ENCODE measurements at regions of chr19 and their contacts with region 1.

Region 1: DNA sequence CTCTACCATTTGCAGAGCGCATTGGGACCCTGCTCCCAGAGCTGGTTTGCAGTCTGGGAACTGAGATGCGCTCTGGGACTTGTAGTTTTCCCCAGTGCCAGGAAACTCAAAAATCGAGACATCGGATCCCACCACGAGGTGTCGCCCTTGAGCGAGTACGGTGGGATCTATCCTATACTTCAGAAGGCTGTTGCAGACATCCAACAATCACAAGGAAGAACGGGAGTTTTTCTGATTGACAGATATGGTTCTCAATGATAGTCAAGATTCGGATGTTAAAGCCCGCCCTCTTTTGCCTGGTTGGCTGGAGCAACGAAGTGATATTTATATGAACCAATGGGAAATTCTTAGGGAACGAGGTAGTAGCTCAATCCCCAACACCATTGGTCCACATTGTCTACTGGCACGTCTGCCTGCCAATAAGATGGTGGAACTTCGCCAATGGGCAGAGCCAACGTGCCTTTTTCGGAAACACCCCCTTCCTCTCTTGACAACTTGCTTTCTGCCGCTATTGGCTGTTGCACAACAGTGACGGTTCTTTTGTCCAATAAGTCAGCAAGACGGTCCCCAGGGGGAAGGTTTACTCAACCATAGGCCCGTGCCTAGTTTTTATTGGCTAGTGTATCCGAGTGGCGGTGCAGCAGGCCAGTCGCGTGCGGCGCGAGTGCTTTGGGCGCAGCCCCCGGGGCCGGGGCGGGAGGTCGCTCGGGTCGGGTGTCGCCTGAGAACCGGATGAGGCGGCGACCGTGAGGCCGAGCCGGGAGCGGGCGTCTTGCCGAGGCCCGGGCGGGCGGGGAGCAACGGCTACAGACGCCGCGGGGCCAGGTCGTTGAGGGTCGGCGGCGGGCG is at the start of gene DNM2:
- DNase-seq: peak; percentile 99 to 100 (median 99)
- H3K4me3 ChIP-seq: peak within 1 kb of the TSS; percentile 26 to 100 (median 90)
- H3K27ac ChIP-seq: peak within 1 kb of the TSS; percentile 73 to 99 (median 94)
- H3K4me1 ChIP-seq: peaks cover 18 to 38% of the 10 kb centered on the region in 2 donors
- H3K27me3 ChIP-seq: no peaks in the 10 kb centered on the region
- CTCF ChIP-seq: peak; percentile 73 to 94 (median 92)
- POLR2A ChIP-seq: peak; percentile 64 to 82
- total RNA-seq, gene DNM2: 73.3 to 196 (median 166) TPM

Region 2: GRCh38 chr19:10769533-10770491 is 52.2 kb after region 1 on chr19:
- intact Hi-C with region 1: loop called (anchors 2 to 10 kb)
- DNase-seq: peak; percentile 82 to 95 (median 91)
- H3K4me3 ChIP-seq: no peak overlapping the region
- H3K27ac ChIP-seq: peak overlapping the region; percentile 68 to 93 (median 90)
- H3K4me1 ChIP-seq: peaks cover 44 to 59% of the 10 kb centered on the region in 2 donors
- H3K27me3 ChIP-seq: no peaks in the 10 kb centered on the region
- CTCF ChIP-seq: peak in 5 of 6 experiments; percentile 37 to 70 (median 61)
- POLR2A ChIP-seq: peak in 1 of 2 donors; percentile 80

Region 3: DNA sequence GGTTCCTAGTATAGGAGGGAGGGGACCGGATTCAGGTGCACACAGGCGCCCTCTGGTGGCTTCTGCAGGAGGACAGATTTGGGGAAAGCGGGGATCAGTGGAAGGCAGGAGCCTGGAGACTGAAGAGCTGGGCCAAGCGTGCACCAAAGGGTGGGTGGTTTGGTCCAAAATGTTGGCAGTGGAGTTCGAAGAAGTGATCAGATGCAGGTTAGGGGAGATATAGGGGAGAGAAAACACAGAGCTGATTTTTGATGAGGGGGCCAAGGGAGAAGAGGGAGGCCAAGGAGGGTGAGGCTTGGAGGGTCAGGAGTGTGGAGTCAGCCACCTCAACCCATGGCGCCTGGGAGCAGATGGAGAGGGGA is 146.9 kb after region 1 on chr19:
- intact Hi-C with region 1: loop called (anchors 5 to 10 kb)
- DNase-seq: peak; percentile 78 to 92 (median 87)
- H3K4me3 ChIP-seq: no peak overlapping the region
- H3K27ac ChIP-seq: peak overlapping the region in 1 of 5 donors; percentile 10
- H3K4me1 ChIP-seq: peaks cover 0 to 5% of the 10 kb centered on the region in 2 donors
- H3K27me3 ChIP-seq: no peaks in the 10 kb centered on the region
- CTCF ChIP-seq: peak; percentile 75 to 87 (median 81)
- POLR2A ChIP-seq: no peak

Region 4: DNA sequence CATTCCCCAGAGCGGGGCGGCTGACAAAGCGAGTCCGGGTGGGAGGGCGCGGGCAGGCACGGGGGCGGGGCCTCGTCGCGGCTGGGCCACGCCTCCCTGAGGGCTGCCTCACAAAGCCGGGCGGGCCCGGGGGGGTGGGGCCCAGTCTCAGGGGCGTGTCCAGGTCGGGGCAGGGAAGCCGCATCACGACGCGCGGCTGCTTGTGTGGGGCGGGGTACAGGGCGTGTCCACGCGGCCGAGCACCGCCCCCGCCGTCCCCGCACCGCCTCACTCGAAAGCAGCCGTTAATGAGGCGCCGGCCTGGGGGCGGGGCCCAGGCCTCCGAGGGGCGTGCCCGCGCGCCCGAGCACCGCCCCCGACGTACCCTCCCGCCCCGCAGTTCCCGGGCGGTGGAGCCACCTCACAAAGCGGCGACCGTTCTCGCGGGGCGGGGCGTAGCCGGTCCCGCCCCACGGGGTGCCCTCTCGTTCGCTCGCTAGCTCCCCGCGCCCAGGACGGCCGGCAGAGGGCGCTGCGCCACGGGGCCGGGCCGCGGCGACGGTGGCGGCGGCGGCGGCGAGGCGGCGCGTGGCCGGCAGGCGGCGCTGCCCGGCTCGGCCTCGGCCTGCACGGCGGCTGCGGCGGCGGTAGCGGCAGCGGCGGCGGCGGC is 153.5 kb after region 1 on chr19 and contains the start of gene CARM1:
- intact Hi-C with region 1: loop called (anchors 5 to 10 kb)
- DNase-seq: peak; percentile 99 to 100 (median 99)
- H3K4me3 ChIP-seq: peak within 1 kb of the TSS; percentile 56 to 99 (median 68)
- H3K27ac ChIP-seq: peak within 1 kb of the TSS in 3 of 5 donors; percentile 59 to 94 (median 70)
- H3K4me1 ChIP-seq: peaks cover 6 to 21% of the 10 kb centered on the region in 2 donors
- H3K27me3 ChIP-seq: no peaks in the 10 kb centered on the region
- CTCF ChIP-seq: peak in 5 of 6 experiments; percentile 6 to 97 (median 58)
- POLR2A ChIP-seq: no peak
- total RNA-seq, gene CARM1: 8.2 to 36.3 (median 22.0) TPM

Measured in adrenal gland (tissue), 19 donors.